ENCODE measurements at regions of chr13 and their contacts with region 1.

Region 1: GRCh38 chr13:51803422-51804294 is at the start of gene DHRS12:
- DNase-seq: peak; percentile 89
- H3K4me3 Mint-ChIP-seq: peak within 1 kb of the TSS; percentile 92
- H3K27ac Mint-ChIP-seq: peak within 1 kb of the TSS; percentile 98
- H3K4me1 Mint-ChIP-seq: peaks cover 57% of the 10 kb centered on the region
- H3K27me3 Mint-ChIP-seq: no peaks in the 10 kb centered on the region
- total RNA-seq, gene DHRS12: 4.1 to 4.9 TPM

Region 2: DNA sequence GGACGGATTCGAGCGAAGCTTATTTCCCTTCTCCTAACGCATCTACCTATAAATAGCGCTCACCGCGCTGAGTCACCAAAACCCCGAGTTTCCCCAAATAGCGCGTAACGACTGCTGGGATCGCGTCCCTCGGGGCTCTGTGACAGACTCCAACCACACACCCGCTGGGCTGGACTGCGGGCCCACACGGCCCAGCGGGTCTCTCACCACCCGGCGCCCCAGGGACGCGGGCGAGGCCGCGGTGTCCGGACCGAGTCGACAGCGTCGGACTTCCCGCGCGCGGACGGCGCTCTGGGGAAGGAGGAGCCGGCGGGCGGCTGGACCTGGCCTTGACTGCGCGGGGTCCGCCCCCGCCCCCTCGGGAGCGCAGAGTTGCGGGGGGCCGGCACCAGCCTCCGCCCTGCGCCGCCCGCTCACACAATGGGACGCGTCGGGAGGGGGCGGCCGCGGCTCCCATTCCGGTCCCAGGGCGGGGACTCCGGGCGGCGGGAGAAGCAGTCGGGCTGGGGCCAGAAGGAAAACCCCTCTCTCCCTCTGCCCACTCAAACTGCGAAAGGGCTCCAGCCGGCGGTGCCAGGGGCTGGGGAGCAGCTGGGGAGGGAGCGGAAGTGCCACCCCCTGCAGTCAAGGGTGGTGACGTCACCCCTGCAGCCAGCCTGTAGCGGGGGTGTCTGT is 1679.7 kb before region 1 on chr13:
- CTCF ChIA-PET with region 1: no interaction called
- intact Hi-C with region 1: loop called (anchors 2 kb)
- DNase-seq: peak; percentile 89
- H3K4me3 Mint-ChIP-seq: peak overlapping the region; percentile 77
- H3K27ac Mint-ChIP-seq: peak overlapping the region; percentile 92
- H3K4me1 Mint-ChIP-seq: peaks cover 48% of the 10 kb centered on the region
- H3K27me3 Mint-ChIP-seq: peaks cover 15% of the 10 kb centered on the region

Region 3: DNA sequence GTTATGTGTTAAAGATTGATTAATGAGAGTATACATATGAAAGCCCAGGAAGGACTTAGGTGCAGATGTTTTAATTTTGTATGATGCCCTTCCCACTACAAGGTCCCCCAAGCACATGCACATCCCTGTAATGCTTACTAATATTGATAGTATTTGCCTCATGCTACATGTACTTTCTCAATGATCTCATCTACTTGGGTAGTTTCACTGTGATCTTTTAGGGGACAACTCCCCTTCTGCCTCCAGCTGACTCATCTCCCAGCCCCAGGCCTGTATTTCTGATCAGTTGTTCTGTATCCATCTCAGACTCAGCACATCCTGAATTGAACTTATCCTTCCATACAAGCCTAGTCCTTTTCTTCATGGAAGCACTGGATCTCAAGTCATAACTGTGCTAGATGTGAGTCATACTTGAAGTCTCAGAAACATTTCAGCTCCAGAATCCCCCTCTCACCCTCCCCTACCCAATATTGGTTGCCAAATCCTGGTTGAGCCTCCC is 301.5 kb before region 1 on chr13:
- CTCF ChIA-PET with region 1: no interaction called
- intact Hi-C with region 1: loop called (anchors 1 kb)
- DNase-seq: peak; percentile 66
- H3K4me3 Mint-ChIP-seq: no peak overlapping the region
- H3K27ac Mint-ChIP-seq: no peak overlapping the region
- H3K4me1 Mint-ChIP-seq: peaks cover 23% of the 10 kb centered on the region
- H3K27me3 Mint-ChIP-seq: no peaks in the 10 kb centered on the region

Region 4: DNA sequence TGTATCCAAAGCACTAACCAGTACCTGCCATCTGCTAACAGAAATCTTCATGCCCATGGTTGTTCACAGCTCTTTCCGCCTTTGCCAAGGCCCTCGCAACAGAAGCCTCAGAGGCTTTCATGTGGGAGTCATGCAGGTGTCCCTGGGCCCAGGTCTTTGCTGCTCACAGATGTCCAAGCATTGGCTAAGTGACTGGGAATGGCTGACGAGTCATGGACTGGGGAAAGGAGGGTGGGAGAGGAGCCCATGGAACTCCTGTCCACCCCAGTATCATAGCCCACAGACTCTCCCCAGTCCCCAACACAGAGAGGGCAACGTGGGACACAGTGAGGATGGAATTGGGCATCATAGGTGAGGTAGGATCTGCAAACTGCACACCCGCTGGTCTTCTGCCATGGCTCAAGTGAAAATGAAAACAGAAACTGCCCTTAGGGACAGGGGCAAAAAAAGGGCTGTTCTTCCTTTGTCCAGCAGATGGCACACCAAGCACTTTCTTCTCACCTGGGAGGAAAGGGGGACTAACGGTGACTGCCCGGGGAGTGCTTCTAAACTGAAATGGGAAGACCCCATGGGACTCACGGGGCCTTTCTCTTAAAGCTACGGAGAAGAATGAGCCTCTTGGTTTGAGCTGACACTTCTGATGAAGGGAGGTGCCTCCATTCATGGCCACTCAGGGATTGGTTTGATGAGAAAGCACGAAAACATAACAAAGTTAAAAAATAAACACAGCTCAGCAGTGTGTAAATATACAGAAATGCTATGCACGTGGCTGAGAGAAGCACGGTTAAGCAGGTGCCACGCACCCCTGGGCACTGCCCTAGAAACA is 11.4 kb after region 1 on chr13:
- CTCF ChIA-PET with region 1: interaction called, 44 read pairs
- intact Hi-C with region 1: loop called (anchors 1 kb)
- DNase-seq: peak; percentile 89
- H3K4me3 Mint-ChIP-seq: peak overlapping the region; percentile 62
- H3K27ac Mint-ChIP-seq: peak overlapping the region; percentile 87
- H3K4me1 Mint-ChIP-seq: peaks cover 86% of the 10 kb centered on the region
- H3K27me3 Mint-ChIP-seq: no peaks in the 10 kb centered on the region

Region 5: DNA sequence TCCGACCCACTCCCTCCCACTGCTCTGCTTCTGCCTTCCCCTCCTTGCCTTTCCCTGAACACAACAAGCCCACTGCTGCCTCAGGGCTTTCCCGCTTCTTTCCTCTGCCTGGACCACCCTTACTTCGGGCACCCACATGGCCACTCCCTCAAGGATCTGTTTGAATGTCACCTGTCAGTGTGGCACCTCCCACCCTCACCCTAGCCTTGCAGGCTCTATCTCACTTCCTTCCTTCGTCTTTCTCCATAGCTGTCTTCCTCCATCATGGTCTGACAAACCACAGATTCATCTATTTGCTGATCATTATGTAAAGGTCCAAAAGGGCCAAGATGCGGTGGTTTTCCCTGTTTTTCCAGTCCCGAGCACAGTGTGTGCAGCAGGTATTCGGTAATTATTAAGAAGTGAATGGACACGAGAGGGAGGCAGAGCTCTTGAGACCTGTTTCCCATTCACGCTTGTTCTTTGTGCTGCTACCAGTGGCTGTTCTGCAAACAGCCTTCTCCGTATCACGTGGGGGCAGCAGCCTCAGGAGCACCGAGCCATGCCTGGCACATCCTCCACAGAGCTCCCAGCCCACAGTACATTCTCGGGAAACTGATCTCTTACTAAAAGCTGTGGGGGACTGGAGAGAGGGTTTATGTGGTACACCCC is 108.3 kb after region 1 on chr13:
- CTCF ChIA-PET with region 1: no interaction called
- intact Hi-C with region 1: loop called (anchors 2 kb)
- DNase-seq: no peak
- H3K4me3 Mint-ChIP-seq: no peak overlapping the region
- H3K27ac Mint-ChIP-seq: no peak overlapping the region
- H3K4me1 Mint-ChIP-seq: peaks cover 29% of the 10 kb centered on the region
- H3K27me3 Mint-ChIP-seq: peaks cover 6% of the 10 kb centered on the region

Region 6: DNA sequence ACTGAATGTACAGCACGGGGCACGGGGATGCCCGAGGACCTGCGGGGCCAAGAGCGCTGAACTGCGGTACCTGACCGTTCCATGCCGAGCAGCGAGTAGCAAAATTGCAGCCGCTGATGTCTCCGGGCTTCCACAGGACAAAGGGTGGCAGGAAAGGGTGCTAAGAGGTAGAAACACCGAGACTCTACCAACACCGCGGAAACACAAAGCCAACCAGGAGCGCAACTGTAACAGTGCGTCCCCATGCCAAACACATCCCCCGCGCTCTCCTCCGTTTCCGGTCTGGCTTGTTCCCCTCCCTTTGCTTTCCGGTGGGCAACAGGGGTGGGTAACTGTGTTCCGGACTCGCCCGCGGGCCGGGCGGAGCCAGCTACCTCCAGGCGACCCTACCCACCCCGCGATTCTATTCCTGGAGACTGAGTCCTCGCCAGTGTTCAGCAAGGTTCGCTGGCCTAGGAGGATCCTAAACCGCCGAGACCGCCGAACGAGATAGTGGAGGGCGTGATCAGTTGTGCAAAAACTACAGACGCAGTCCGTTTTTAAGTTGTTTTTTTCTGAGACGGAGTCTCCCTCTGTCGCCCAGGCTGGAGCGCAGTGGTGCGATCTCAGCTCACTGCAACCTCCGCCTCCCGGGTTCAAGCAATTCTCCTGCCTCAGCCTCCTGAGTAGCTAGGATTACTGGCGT is 390.7 kb after region 1 on chr13:
- CTCF ChIA-PET with region 1: no interaction called
- intact Hi-C with region 1: loop called (anchors 1 kb)
- DNase-seq: peak; percentile 90
- H3K4me3 Mint-ChIP-seq: peak overlapping the region; percentile 98
- H3K27ac Mint-ChIP-seq: peak overlapping the region; percentile 97
- H3K4me1 Mint-ChIP-seq: peaks cover 30% of the 10 kb centered on the region
- H3K27me3 Mint-ChIP-seq: no peaks in the 10 kb centered on the region

Measured in activated naive CD4-positive, alpha-beta T cell treated with anti-CD3 and anti-CD28 coated beads for 36 hours (primary cell).